ENCODE measurements at regions of chr9 and their contacts with region 1.

Region 1: GRCh38 chr9:2645569-2645968 is 24.0 kb downstream of the VLDLR start:
- DNase-seq: no peak
- ATAC-seq: no peak
- H3K4me3 ChIP-seq: no peak overlapping the region
- H3K27ac ChIP-seq: no peak overlapping the region
- H3K4me1 ChIP-seq: peaks cover 0 to 8% (median 0%) of the 10 kb centered on the region in 9 donors
- H3K27me3 ChIP-seq: no peaks in the 10 kb centered on the region
- CTCF ChIP-seq: no peak

Region 2: GRCh38 chr9:2336055-2336454 is 309.5 kb before region 1 on chr9:
- intact Hi-C with region 1: loop called in 1 of 10 experiments (anchors 10 kb)
- DNase-seq: no peak
- ATAC-seq: no peak
- H3K4me3 ChIP-seq: no peak overlapping the region
- H3K27ac ChIP-seq: no peak overlapping the region
- H3K4me1 ChIP-seq: peaks cover 0 to 26% (median 7%) of the 10 kb centered on the region in 9 donors
- H3K27me3 ChIP-seq: no peaks in the 10 kb centered on the region
- CTCF ChIP-seq: peak in 6 of 9 donors; percentile 8 to 45 (median 30)

Measured in heart right ventricle (tissue), 16 donors.